Ovary (tissue), 10 donors: ENCODE measurements at regions of chr6 and their contacts with region 1.

Region 1: GRCh38 chr6:56902641-56903464 is 52.1 kb upstream of the BEND6 start:
- DNase-seq: peak; percentile 22 to 53 (median 37)
- H3K4me3 ChIP-seq: no peak overlapping the region
- H3K27ac ChIP-seq: no peak overlapping the region
- H3K4me1 ChIP-seq: no peaks in the 10 kb centered on the region
- H3K27me3 ChIP-seq: no peaks in the 10 kb centered on the region
- CTCF ChIP-seq: peak; percentile 23 to 41 (median 27)
- EP300 ChIP-seq: no peak
- POLR2A ChIP-seq: no peak

Region 2: DNA sequence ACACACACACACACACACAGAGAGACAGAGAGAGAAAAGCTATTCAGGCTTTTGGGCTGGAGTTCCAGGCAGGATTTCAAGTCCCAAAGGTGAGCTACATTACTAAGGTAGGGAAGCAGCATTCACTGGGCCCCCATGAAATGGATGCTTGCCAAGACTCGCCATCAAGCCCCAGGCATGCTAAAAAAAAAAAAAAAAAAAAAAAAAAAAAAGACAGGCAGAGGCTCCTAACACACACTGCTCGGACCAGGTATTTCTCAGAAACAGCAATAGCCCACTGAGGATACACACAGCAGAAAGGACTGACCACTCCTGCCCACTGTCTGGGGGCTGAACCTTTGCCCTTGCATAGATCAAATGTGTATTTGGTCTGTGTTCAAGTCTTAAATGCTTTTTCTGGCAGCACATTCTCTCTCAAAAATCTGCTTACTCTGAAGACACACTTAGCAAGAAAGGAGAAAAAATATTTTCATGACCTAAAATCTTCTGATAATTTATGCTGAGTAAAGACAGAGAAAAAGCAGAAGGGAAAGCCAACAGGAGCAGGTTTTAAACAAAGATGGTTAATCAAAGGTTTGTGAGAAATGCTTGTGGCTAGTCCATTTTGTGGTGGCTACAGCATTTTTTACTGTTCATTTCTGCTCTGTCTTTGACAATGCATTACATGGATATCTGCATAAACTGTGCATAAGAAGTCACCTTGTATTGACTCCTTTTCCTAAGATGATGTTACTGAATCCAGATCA is 14.1 kb after region 1 on chr6:
- intact Hi-C with region 1: loop called in 1 of 4 experiments (anchors 2 kb)
- DNase-seq: no peak
- H3K4me3 ChIP-seq: no peak overlapping the region
- H3K27ac ChIP-seq: no peak overlapping the region
- H3K4me1 ChIP-seq: no peaks in the 10 kb centered on the region
- H3K27me3 ChIP-seq: no peaks in the 10 kb centered on the region
- CTCF ChIP-seq: no peak
- EP300 ChIP-seq: no peak
- POLR2A ChIP-seq: no peak

Region 3: GRCh38 chr6:57013521-57013926 is 110.7 kb after region 1 on chr6:
- intact Hi-C with region 1: loop called in 1 of 4 experiments (anchors 10 kb)
- DNase-seq: no peak
- H3K4me3 ChIP-seq: no peak overlapping the region
- H3K27ac ChIP-seq: no peak overlapping the region
- H3K4me1 ChIP-seq: no peaks in the 10 kb centered on the region
- H3K27me3 ChIP-seq: no peaks in the 10 kb centered on the region
- CTCF ChIP-seq: no peak
- EP300 ChIP-seq: no peak
- POLR2A ChIP-seq: no peak

Region 4: GRCh38 chr6:57038906-57039515 is 136.2 kb after region 1 on chr6:
- intact Hi-C with region 1: loop called in 1 of 4 experiments (anchors 10 kb)
- DNase-seq: no peak
- H3K4me3 ChIP-seq: no peak overlapping the region
- H3K27ac ChIP-seq: no peak overlapping the region
- H3K4me1 ChIP-seq: no peaks in the 10 kb centered on the region
- H3K27me3 ChIP-seq: no peaks in the 10 kb centered on the region
- CTCF ChIP-seq: no peak
- EP300 ChIP-seq: no peak
- POLR2A ChIP-seq: no peak

Region 5: DNA sequence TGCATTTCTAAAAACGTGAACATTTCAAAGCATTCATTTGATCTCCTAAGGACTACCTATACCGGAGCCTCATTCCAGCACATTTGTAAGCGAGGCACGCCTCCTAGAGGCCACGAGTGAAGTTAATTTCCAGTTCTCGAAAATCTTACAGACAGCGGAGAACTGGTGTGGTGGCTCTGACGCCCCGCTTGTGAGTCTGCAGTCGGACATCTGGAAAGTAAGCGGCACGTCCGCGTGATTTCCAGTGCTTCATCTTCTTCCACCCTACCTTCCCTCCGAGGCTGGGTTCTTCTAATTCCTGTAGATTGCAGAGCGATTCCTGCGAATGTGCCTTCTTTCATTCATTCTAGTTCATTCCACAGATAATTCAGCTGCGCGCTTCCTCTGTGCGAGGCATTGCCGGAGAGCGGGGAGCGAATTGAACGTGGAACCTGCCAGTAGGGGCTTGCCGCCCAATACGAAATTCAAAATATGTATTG is 413.8 kb after region 1 on chr6:
- intact Hi-C with region 1: loop called in 3 of 4 experiments (anchors 5 to 10 kb)
- DNase-seq: peak; percentile 69 to 86 (median 83)
- H3K4me3 ChIP-seq: peak overlapping the region; percentile 63
- H3K27ac ChIP-seq: no peak overlapping the region
- H3K4me1 ChIP-seq: peaks cover 4% of the 10 kb centered on the region
- H3K27me3 ChIP-seq: no peaks in the 10 kb centered on the region
- CTCF ChIP-seq: peak; percentile 73 to 87 (median 83)
- EP300 ChIP-seq: no peak
- POLR2A ChIP-seq: no peak

Region 6: DNA sequence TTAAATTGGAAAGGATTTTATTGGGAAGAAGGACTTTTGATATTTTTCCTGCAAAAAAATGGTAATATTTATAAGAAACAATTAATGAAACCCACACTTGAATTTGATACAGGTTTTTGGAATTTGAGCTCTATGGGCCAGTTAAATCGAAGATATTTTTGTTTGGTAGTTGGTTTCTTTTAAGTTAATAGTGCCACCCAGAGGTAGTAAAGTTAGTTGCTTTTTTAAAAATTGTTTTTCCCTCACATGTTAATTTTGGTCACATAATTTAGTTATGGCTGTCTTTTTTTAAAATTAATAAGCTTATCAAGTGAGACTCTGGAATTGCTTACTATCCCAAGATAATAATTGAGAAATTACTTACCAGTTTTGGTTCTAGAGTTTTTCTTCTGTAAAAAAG is 421.7 kb after region 1 on chr6:
- intact Hi-C with region 1: loop called in 3 of 4 experiments (anchors 5 to 10 kb)
- DNase-seq: no peak
- H3K4me3 ChIP-seq: no peak overlapping the region
- H3K27ac ChIP-seq: no peak overlapping the region
- H3K4me1 ChIP-seq: no peaks in the 10 kb centered on the region
- H3K27me3 ChIP-seq: no peaks in the 10 kb centered on the region
- CTCF ChIP-seq: peak in 1 of 3 donors; percentile 33
- EP300 ChIP-seq: no peak
- POLR2A ChIP-seq: no peak

Region 7: GRCh38 chr6:57469072-57469471 is 566.2 kb after region 1 on chr6:
- intact Hi-C with region 1: no loop called
- DNase-seq: no peak
- H3K4me3 ChIP-seq: no peak overlapping the region
- H3K27ac ChIP-seq: no peak overlapping the region
- H3K4me1 ChIP-seq: peaks cover 2% of the 10 kb centered on the region
- H3K27me3 ChIP-seq: no peaks in the 10 kb centered on the region
- CTCF ChIP-seq: no peak
- EP300 ChIP-seq: no peak
- POLR2A ChIP-seq: no peak